Panc1 (cell line): ENCODE measurements at regions of chr1 and their contacts with region 1.

Region 1: GRCh38 chr1:121483961-121484424 is 299.2 kb downstream of the SRGAP2C start:
- DNase-seq: no peak
- ATAC-seq: no peak
- H3K4me3 ChIP-seq: no peak overlapping the region
- H3K27ac ChIP-seq: no peak overlapping the region
- H3K4me1 ChIP-seq: no peaks in the 10 kb centered on the region
- H3K27me3 ChIP-seq: no peaks in the 10 kb centered on the region
- CTCF ChIP-seq: no peak

Region 2: DNA sequence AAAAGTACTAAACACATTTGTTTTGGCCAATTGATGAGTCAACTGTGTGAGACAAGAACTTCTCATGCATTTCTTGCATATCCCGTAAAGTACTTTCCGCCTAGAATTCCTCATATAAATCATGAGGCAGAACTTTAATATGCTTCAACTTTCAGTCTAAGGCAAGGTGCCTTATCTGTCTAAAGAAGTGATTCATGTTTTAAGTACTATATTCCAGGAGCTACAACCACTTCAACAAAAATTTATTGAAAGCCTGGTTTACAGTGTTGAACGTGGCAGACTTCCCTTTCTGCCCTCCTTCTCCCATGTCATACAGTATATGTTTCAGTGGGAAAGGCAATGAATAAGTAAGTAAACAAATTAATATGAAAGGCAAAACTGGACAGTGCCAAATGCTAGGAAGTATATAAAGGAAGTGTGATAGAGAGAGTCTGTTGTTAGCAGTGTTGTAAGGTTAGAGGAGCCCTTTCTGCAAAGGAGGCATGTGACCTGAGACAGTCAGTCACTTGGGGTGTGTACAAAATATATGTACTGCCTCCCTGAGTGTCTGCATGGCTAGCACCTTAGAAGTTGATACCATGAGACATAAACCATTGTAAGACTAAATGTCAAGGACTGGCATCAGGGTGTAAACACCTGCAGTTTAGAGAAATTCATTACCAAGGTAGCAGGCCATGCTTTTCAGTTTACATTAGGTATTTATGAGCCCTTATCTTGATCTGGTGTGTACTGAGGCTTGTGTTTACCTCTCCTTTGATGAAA is 63.0 kb after region 1 on chr1:
- CTCF ChIA-PET with region 1: no interaction called
- POLR2A ChIA-PET with region 1: no interaction called
- in situ Hi-C with region 1: no loop called
- intact Hi-C with region 1: loop called (anchors 10 kb)
- DNase-seq: peak; percentile 10
- ATAC-seq: 0 out of 2 replicates have a peak, but pooled peaks have one; percentile 26
- H3K4me3 ChIP-seq: no peak overlapping the region
- H3K27ac ChIP-seq: no peak overlapping the region
- H3K4me1 ChIP-seq: peaks cover 3% of the 10 kb centered on the region
- H3K27me3 ChIP-seq: peaks cover 3% of the 10 kb centered on the region; the same call in 1 of the 2 replicates
- CTCF ChIP-seq: no peak